Activated B cell treated with CpG ODN at 0.5 μM for 24 hours (primary cell): ENCODE measurements at regions of chr6 and their contacts with region 1.

Region 1: GRCh38 chr6:157563611-157564284 is 182.8 kb downstream of the ZDHHC14 start:
- DNase-seq: no peak
- ATAC-seq: peak; percentile 69
- H3K4me3 Mint-ChIP-seq: peak overlapping the region; percentile 44
- H3K27ac Mint-ChIP-seq: peak overlapping the region; percentile 80
- H3K4me1 Mint-ChIP-seq: peaks cover 92% of the 10 kb centered on the region
- H3K27me3 Mint-ChIP-seq: no peaks in the 10 kb centered on the region
- CTCF ChIP-seq: no peak

Region 2: DNA sequence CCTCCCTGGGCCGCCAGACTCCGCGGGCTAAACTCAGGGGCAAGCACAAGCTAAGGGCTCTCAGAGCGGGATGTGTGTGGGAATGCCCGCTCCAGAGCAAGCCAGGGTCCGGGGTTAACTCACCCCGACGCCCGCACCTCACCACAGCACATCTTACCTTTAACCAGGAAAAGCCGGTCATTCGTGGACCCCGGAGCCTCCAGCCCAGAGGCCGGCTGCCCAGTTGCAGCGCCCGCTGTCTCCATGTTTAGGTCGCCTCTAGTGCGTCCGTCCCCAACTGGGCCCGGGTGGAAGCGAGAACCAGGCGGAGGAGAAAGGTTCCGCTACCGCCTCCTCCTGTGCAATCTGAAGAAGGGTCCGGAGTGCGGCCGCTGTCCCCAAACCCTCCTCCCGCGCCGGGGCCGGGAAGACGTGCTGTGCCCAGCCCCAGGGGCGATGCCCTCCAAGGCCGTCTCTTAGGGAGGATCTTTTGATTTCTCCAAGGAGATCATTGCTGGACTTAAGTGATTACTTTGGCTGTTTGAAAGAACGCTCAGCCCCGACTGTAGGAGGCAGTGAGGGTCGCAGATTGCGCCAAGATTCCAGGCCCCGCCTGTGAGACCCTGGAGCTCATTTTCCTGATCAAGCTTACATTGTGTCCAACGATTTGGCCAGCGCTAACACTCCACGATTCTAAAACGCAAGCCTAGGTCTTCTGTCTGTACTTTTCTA is 240.3 kb before region 1 on chr6 and contains the start of gene TMEM242:
- CTCF ChIA-PET with region 1: no interaction called
- POLR2A ChIA-PET with region 1: interaction called, 16 read pairs
- intact Hi-C with region 1: loop called (anchors 2 kb)
- DNase-seq: peak; percentile 90
- ATAC-seq: peak; percentile 94
- H3K4me3 Mint-ChIP-seq: peak within 1 kb of the TSS; percentile 96
- H3K27ac Mint-ChIP-seq: peak within 1 kb of the TSS; percentile 92
- H3K4me1 Mint-ChIP-seq: peaks cover 19% of the 10 kb centered on the region
- H3K27me3 Mint-ChIP-seq: peaks cover 16% of the 10 kb centered on the region
- CTCF ChIP-seq: no peak
- total RNA-seq, gene TMEM242: 16.1 and 17.6 TPM in 2 replicates

Region 3: GRCh38 chr6:157368359-157369049 is 195.2 kb before region 1 on chr6:
- CTCF ChIA-PET with region 1: no interaction called
- POLR2A ChIA-PET with region 1: no interaction called
- intact Hi-C with region 1: no loop called
- DNase-seq: no peak
- ATAC-seq: no peak
- H3K4me3 Mint-ChIP-seq: no peak overlapping the region
- H3K27ac Mint-ChIP-seq: no peak overlapping the region
- H3K4me1 Mint-ChIP-seq: peaks cover 20% of the 10 kb centered on the region
- H3K27me3 Mint-ChIP-seq: peaks cover 31% of the 10 kb centered on the region
- CTCF ChIP-seq: no peak

Region 4: GRCh38 chr6:157535339-157536222 is 28.2 kb before region 1 on chr6:
- CTCF ChIA-PET with region 1: no interaction called
- POLR2A ChIA-PET with region 1: interaction called, 14 read pairs
- intact Hi-C with region 1: no loop called
- DNase-seq: no peak
- ATAC-seq: peak; percentile 45
- H3K4me3 Mint-ChIP-seq: peak overlapping the region; percentile 21
- H3K27ac Mint-ChIP-seq: peak overlapping the region; percentile 70
- H3K4me1 Mint-ChIP-seq: peaks cover 60% of the 10 kb centered on the region
- H3K27me3 Mint-ChIP-seq: no peaks in the 10 kb centered on the region
- CTCF ChIP-seq: no peak

Region 5: GRCh38 chr6:157548635-157549467 is 14.9 kb before region 1 on chr6:
- CTCF ChIA-PET with region 1: no interaction called
- POLR2A ChIA-PET with region 1: interaction called, 15 read pairs
- intact Hi-C with region 1: loop called (anchors 1 kb)
- DNase-seq: no peak
- ATAC-seq: peak; percentile 70
- H3K4me3 Mint-ChIP-seq: peak overlapping the region; percentile 64
- H3K27ac Mint-ChIP-seq: peak overlapping the region; percentile 43
- H3K4me1 Mint-ChIP-seq: peaks cover 47% of the 10 kb centered on the region
- H3K27me3 Mint-ChIP-seq: no peaks in the 10 kb centered on the region
- CTCF ChIP-seq: no peak

Region 6: GRCh38 chr6:157597446-157598312 is 33.9 kb after region 1 on chr6:
- CTCF ChIA-PET with region 1: interaction called, 3 read pairs
- POLR2A ChIA-PET with region 1: no interaction called
- intact Hi-C with region 1: loop called (anchors 1 kb)
- DNase-seq: no peak
- ATAC-seq: peak; percentile 70
- H3K4me3 Mint-ChIP-seq: peak overlapping the region; percentile 46
- H3K27ac Mint-ChIP-seq: peak overlapping the region; percentile 71
- H3K4me1 Mint-ChIP-seq: peaks cover 54% of the 10 kb centered on the region
- H3K27me3 Mint-ChIP-seq: no peaks in the 10 kb centered on the region
- CTCF ChIP-seq: no peak

Region 7: DNA sequence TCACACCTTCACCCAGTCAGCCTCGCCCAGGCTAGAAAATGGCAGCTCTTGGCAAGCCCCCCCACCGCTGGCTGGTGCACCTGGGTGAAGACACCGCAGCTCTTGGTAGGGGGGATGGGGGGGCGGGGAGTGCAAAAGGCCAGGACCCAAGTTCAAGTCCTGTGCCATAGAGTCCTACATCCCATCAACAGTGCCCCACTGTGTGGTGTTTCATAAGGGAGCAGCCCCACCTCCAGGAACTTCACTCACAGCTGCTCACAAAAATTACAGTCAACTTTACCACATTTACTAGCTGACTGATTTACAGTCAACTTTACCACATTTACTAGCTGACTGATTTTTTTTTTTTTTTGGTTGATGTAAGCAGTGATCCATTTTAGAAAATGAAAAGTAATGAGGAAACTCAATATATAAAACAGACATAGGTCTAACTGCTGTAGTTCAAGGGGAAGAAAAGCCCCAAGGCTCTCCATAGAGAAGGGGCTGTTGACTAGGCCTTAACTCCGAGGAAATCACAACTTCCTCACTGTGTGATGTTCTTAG is 50.3 kb after region 1 on chr6:
- CTCF ChIA-PET with region 1: no interaction called
- POLR2A ChIA-PET with region 1: interaction called, 10 read pairs
- intact Hi-C with region 1: loop called (anchors 2 kb)
- DNase-seq: no peak
- ATAC-seq: peak; percentile 74
- H3K4me3 Mint-ChIP-seq: peak overlapping the region; percentile 41
- H3K27ac Mint-ChIP-seq: peak overlapping the region; percentile 85
- H3K4me1 Mint-ChIP-seq: peaks cover 67% of the 10 kb centered on the region
- H3K27me3 Mint-ChIP-seq: no peaks in the 10 kb centered on the region
- CTCF ChIP-seq: no peak